Vagina (tissue), 2 donors: ENCODE measurements at regions of chr22 and their contacts with region 1.

Region 1: DNA sequence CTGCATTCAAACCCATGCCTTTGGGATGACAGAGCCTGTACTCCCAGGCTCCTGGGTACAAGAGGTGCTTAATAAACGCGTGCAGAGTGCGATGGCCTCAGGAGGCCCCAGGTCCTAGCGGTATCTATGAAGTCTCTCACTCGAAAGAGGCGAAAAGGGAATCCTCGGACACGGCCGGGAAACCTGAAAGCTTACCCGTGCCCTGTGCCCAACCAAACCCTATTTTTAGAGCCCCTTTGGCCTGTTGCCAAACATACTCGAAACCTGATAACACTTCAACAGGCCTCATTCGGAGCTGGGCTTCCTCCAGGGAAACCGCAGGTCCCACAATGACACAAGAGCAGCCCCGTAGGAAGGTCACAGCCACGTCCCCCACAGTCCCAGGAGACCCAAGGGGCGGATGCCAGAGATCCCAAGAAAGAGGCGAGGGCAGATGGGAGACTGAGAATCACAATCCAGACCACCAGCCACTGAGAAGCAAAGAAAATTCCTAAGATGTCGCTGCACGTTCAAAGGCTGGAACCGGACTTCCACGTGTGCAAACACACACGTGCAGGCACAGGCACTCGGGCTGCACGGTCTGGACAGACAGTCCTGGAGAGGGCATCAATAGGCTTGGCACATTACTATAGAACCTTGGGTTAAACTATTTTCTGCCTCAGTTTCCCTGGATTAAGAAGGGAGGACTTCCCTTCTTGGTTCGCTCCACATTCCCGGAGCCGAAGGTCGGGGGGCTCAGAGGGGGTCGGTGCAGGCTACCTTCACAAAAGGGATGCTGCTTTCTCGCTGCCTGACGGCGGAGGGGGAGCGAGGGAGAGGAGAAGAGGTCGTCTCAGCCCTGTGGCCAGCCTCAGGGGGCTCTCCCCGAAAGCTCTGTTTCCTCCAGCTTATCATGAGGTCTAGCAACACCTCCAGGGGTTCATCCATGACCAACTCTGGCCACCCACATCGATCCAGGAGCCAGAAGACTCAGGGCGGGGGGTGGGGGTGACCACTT is 8.2 kb downstream of the PDGFB start:
- DNase-seq: no peak
- H3K4me3 ChIP-seq: no peak overlapping the region
- H3K27ac ChIP-seq: peak overlapping the region; percentile 61
- H3K4me1 ChIP-seq: peaks cover 77% of the 10 kb centered on the region
- H3K27me3 ChIP-seq: no peaks in the 10 kb centered on the region
- CTCF ChIP-seq: no peak
- POLR2A ChIP-seq: no peak

Region 2: GRCh38 chr22:39319270-39320022 is 82.8 kb after region 1 on chr22 and contains the start of gene RPL3:
- intact Hi-C with region 1: loop called (anchors 10 kb)
- DNase-seq: peak in 1 of 2 donors; percentile 98
- H3K4me3 ChIP-seq: peak within 1 kb of the TSS; percentile 82 to 90
- H3K27ac ChIP-seq: peak within 1 kb of the TSS; percentile 98
- H3K4me1 ChIP-seq: peaks cover 48% of the 10 kb centered on the region
- H3K27me3 ChIP-seq: no peaks in the 10 kb centered on the region
- CTCF ChIP-seq: peak in 2 of 3 experiments; percentile 16
- POLR2A ChIP-seq: peak in 1 of 2 donors; percentile 80
- total RNA-seq, gene RPL3: 2,613 TPM

Region 3: GRCh38 chr22:39502109-39502788 is 265.6 kb after region 1 on chr22 and contains the start of gene MIEF1:
- intact Hi-C with region 1: no loop called
- DNase-seq: peak in 1 of 2 donors; percentile 98
- H3K4me3 ChIP-seq: peak within 1 kb of the TSS; percentile 57 to 73
- H3K27ac ChIP-seq: peak within 1 kb of the TSS; percentile 83
- H3K4me1 ChIP-seq: peaks cover 33% of the 10 kb centered on the region
- H3K27me3 ChIP-seq: no peaks in the 10 kb centered on the region
- CTCF ChIP-seq: no peak
- POLR2A ChIP-seq: peak in 1 of 2 donors; percentile 16
- total RNA-seq, gene MIEF1: 18.9 TPM

Region 4: GRCh38 chr22:40463017-40463631 is 1226.5 kb after region 1 on chr22:
- intact Hi-C with region 1: no loop called
- DNase-seq: no peak
- H3K4me3 ChIP-seq: peak overlapping the region in 1 of 2 donors; percentile 26
- H3K27ac ChIP-seq: no peak overlapping the region
- H3K4me1 ChIP-seq: peaks cover 4% of the 10 kb centered on the region
- H3K27me3 ChIP-seq: no peaks in the 10 kb centered on the region
- CTCF ChIP-seq: no peak
- POLR2A ChIP-seq: no peak